CD4-positive, alpha-beta T cell (primary cell): ENCODE measurements at regions of chrX and their contacts with region 1.

Region 1: DNA sequence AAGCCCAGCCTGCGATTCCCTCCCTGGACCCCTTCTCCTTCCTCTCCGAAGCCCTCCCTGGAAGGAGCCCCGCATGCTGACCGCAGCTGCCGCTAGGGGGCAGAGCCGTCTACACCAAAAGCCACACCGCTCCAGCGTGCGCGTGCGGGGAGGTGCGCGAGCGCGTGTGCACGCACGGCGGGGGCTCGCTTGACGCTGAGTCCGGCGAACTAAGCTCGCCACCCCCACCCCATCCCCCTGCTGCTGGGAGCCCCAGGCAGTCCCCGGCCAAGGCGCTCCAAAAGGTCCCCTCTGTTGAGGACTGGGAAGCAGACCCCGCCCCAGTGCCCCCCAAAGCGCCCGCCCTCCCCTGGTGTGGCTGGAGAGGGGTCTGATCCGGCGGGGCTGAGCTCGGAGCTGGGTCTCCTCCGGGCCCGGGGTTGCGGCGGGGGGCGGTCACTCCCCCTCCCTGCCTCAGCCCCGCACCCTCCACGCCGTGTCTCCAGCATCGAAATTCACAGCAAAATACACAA is 11.0 kb upstream of the CCNQ start:
- DNase-seq: peak; percentile 69 to 88 (median 72)
- ATAC-seq: peak; percentile 85
- H3K4me3 ChIP-seq: peak overlapping the region; percentile 61
- H3K4me3 Mint-ChIP-seq: peak overlapping the region; percentile 91
- H3K27ac ChIP-seq: no peak overlapping the region
- H3K27ac Mint-ChIP-seq: peak overlapping the region; percentile 71
- H3K4me1 ChIP-seq: peaks cover 18% of the 10 kb centered on the region
- H3K4me1 Mint-ChIP-seq: peaks cover 7% of the 10 kb centered on the region
- H3K27me3 ChIP-seq: no peaks in the 10 kb centered on the region
- H3K27me3 Mint-ChIP-seq: no peaks in the 10 kb centered on the region
- CTCF ChIP-seq: peak; percentile 64

Region 2: GRCh38 chrX:153554519-153555167 is 55.3 kb before region 1 on chrX:
- CTCF ChIA-PET with region 1: interaction called, 3 read pairs
- POLR2A ChIA-PET with region 1: no interaction called
- intact Hi-C with region 1: loop called in 1 of 2 experiments (anchors 5 kb)
- DNase-seq: peak; percentile 40 to 76 (median 54)
- ATAC-seq: peak; percentile 68
- H3K4me3 ChIP-seq: no peak overlapping the region
- H3K4me3 Mint-ChIP-seq: no peak overlapping the region
- H3K27ac ChIP-seq: no peak overlapping the region
- H3K27ac Mint-ChIP-seq: no peak overlapping the region
- H3K4me1 ChIP-seq: peaks cover 2% of the 10 kb centered on the region
- H3K4me1 Mint-ChIP-seq: no peaks in the 10 kb centered on the region
- H3K27me3 ChIP-seq: peaks cover 0 to 2% of the 10 kb centered on the region in 2 experiments
- H3K27me3 Mint-ChIP-seq: no peaks in the 10 kb centered on the region
- CTCF ChIP-seq: peak; percentile 46

Region 3: GRCh38 chrX:153649178-153649914 is 39.4 kb after region 1 on chrX:
- CTCF ChIA-PET with region 1: interaction called, 3 read pairs
- POLR2A ChIA-PET with region 1: interaction called, 6 read pairs
- intact Hi-C with region 1: loop called (anchors 2 to 5 kb)
- DNase-seq: peak in 9 of 14 experiments; percentile 15 to 69 (median 36)
- ATAC-seq: peak; percentile 71
- H3K4me3 ChIP-seq: no peak overlapping the region
- H3K4me3 Mint-ChIP-seq: no peak overlapping the region
- H3K27ac ChIP-seq: no peak overlapping the region
- H3K27ac Mint-ChIP-seq: no peak overlapping the region
- H3K4me1 ChIP-seq: peaks cover 11% of the 10 kb centered on the region
- H3K4me1 Mint-ChIP-seq: no peaks in the 10 kb centered on the region
- H3K27me3 ChIP-seq: peaks cover 27 to 28% of the 10 kb centered on the region in 2 experiments
- H3K27me3 Mint-ChIP-seq: peaks cover 16% of the 10 kb centered on the region
- CTCF ChIP-seq: peak; percentile 44

Region 4: GRCh38 chrX:153662266-153662665 is 52.3 kb after region 1 on chrX:
- CTCF ChIA-PET with region 1: no interaction called
- POLR2A ChIA-PET with region 1: interaction called, 3 read pairs
- intact Hi-C with region 1: loop called (anchors 2 kb)
- DNase-seq: peak; percentile 30 to 77 (median 53)
- ATAC-seq: no peak
- H3K4me3 ChIP-seq: peak overlapping the region; percentile 25
- H3K4me3 Mint-ChIP-seq: no peak overlapping the region
- H3K27ac ChIP-seq: no peak overlapping the region
- H3K27ac Mint-ChIP-seq: no peak overlapping the region
- H3K4me1 ChIP-seq: peaks cover 6% of the 10 kb centered on the region
- H3K4me1 Mint-ChIP-seq: peaks cover 5% of the 10 kb centered on the region
- H3K27me3 ChIP-seq: peaks cover 0 to 2% of the 10 kb centered on the region in 2 experiments
- H3K27me3 Mint-ChIP-seq: peaks cover 15% of the 10 kb centered on the region
- CTCF ChIP-seq: peak; percentile 51